Activated B cell treated with CpG ODN at 0.5 μM for 24 hours (primary cell): ENCODE measurements at regions of chr2 and their contacts with region 1.

Region 1: GRCh38 chr2:205947621-205948495 is 138.1 kb downstream of the INO80D start:
- DNase-seq: peak; percentile 28
- ATAC-seq: peak; percentile 64
- H3K4me3 Mint-ChIP-seq: no peak overlapping the region
- H3K27ac Mint-ChIP-seq: no peak overlapping the region
- H3K4me1 Mint-ChIP-seq: peaks cover 2% of the 10 kb centered on the region
- H3K27me3 Mint-ChIP-seq: peaks cover 19% of the 10 kb centered on the region
- CTCF ChIP-seq: peak; percentile 89

Region 2: DNA sequence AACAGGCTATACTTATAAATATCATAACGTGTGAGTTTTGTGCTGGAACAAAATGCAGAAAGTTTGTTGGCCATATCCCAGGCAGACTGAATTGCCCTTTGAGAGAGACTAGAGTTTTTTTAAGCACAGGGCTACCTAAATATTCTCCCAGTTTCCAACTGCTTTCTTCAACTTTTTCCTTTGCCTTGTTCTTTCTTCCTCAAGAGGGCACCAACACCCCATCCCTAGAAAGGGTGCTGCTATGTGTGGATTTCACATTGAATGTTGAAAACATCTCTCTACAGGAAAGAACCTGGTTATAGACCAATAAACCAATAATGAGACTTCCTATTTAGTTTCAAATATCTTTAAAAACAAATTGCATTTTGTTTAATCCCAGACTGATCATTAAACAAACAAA is 1923.4 kb before region 1 on chr2:
- CTCF ChIA-PET with region 1: no interaction called
- POLR2A ChIA-PET with region 1: no interaction called
- intact Hi-C with region 1: loop called (anchors 10 kb)
- DNase-seq: no peak
- ATAC-seq: no peak
- H3K4me3 Mint-ChIP-seq: no peak overlapping the region
- H3K27ac Mint-ChIP-seq: no peak overlapping the region
- H3K4me1 Mint-ChIP-seq: peaks cover 14% of the 10 kb centered on the region
- H3K27me3 Mint-ChIP-seq: no peaks in the 10 kb centered on the region
- CTCF ChIP-seq: no peak

Region 3: GRCh38 chr2:204145263-204145751 is 1802.6 kb before region 1 on chr2:
- CTCF ChIA-PET with region 1: interaction called, 3 read pairs
- POLR2A ChIA-PET with region 1: no interaction called
- intact Hi-C with region 1: loop called (anchors 1 kb)
- DNase-seq: peak; percentile 42
- ATAC-seq: peak; percentile 71
- H3K4me3 Mint-ChIP-seq: peak overlapping the region; percentile 66
- H3K27ac Mint-ChIP-seq: no peak overlapping the region
- H3K4me1 Mint-ChIP-seq: peaks cover 9% of the 10 kb centered on the region
- H3K27me3 Mint-ChIP-seq: peaks cover 14% of the 10 kb centered on the region
- CTCF ChIP-seq: peak; percentile 90

Region 4: DNA sequence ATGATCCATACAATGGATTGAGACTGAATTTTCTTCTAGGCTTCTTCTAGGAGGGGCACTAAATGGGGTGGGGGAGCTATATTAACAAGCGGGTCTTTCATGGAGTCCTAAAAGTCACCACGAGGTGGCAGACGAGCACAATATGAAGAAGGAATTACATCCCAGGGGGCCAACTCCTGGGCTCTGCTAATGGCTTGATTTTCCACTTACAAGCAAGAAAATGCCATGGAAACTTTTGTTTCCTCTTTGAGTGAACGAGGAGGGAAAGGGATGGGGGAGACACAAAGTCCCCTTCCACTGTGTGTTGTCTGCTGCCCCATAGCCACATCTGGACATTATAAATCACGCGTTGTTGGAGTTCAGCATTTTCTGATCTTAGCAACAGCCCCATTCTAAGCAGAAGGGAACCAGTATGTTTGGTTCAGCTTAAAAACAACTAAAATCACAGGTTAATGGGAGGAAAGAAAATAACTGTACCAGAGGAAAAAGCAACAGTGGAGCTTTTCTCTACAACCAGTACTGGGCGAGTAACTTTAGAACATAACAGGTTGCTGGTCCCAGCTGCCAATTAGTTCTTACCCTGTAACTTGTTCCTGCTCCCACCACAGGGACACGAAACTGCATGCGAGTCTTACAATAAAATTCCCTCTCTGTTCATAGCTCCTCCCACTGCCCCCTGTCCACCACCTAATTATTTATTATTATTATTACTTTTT is 1687.5 kb before region 1 on chr2:
- CTCF ChIA-PET with region 1: interaction called, 4 read pairs
- POLR2A ChIA-PET with region 1: no interaction called
- intact Hi-C with region 1: loop called (anchors 1 kb)
- DNase-seq: no peak
- ATAC-seq: no peak
- H3K4me3 Mint-ChIP-seq: no peak overlapping the region
- H3K27ac Mint-ChIP-seq: no peak overlapping the region
- H3K4me1 Mint-ChIP-seq: no peaks in the 10 kb centered on the region
- H3K27me3 Mint-ChIP-seq: peaks cover 18% of the 10 kb centered on the region
- CTCF ChIP-seq: no peak

Region 5: GRCh38 chr2:204325468-204325867 is 1622.4 kb before region 1 on chr2:
- CTCF ChIA-PET with region 1: interaction called, 17 read pairs
- POLR2A ChIA-PET with region 1: no interaction called
- intact Hi-C with region 1: loop called (anchors 1 kb)
- DNase-seq: no peak
- ATAC-seq: peak; percentile 45
- H3K4me3 Mint-ChIP-seq: no peak overlapping the region
- H3K27ac Mint-ChIP-seq: no peak overlapping the region
- H3K4me1 Mint-ChIP-seq: peaks cover 2% of the 10 kb centered on the region
- H3K27me3 Mint-ChIP-seq: peaks cover 2% of the 10 kb centered on the region
- CTCF ChIP-seq: no peak